ENCODE measurements at regions of chr9 and their contacts with region 1.

Region 1: GRCh38 chr9:112898872-112899311 is 8.2 kb upstream of the SLC46A2 start:
- DNase-seq: no peak
- H3K4me3 ChIP-seq: no peak overlapping the region
- CTCF ChIP-seq: no peak

Region 2: DNA sequence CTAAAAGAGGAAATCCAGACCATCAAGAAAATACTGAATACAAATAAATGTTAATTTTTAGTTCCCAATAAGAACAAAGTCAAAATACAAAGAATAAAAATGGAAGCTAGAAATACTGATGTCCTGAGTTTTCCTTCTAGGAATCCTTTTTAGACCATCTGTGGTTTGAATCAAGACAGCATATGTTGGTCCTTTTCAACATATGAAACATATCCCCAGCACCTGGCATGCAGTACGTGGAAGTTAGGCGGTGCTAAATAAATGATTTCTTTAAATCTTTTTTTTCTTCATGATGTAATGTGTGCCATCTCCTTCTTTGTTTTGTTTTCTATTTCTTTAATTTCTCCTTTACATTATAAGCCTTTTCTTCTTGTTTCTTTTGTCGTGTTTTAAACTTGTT is 378.2 kb before region 1 on chr9:
- CTCF ChIA-PET with region 1: no interaction called
- POLR2A ChIA-PET with region 1: no interaction called
- DNase-seq: no peak
- H3K4me3 ChIP-seq: no peak overlapping the region
- CTCF ChIP-seq: no peak

Region 3: DNA sequence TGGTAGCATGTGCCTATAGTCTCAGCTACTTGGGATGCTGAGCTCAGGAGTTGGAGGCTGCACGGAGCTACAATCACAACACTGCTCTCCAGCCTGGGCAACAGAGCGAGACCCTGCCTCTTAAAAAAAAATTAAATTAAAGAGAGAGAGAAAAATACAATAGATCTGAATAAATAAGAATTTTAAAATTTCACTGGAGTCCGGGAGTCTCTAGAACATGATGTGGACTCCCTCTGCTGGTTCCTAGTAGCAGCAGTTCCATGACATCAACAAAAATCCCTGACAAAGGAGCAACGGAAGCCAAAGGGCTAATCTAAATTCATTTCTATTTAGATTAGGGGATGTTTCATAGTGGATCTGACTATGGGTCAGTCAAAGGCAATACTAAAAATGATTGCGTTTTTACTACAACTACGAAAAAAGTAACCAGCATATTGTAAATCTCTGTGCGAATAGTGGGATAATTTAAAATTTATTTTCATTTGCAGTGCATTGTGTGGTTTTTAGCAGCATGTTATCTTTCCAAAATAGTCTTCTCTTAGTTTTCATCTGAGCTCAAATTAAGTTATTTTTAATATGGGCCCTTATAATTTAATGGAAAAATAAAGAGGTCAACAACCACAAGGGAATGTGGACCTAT is 187.7 kb before region 1 on chr9:
- CTCF ChIA-PET with region 1: interaction called, 12 read pairs
- POLR2A ChIA-PET with region 1: no interaction called
- DNase-seq: no peak
- H3K4me3 ChIP-seq: no peak overlapping the region
- CTCF ChIP-seq: peak; percentile 57

Region 4: DNA sequence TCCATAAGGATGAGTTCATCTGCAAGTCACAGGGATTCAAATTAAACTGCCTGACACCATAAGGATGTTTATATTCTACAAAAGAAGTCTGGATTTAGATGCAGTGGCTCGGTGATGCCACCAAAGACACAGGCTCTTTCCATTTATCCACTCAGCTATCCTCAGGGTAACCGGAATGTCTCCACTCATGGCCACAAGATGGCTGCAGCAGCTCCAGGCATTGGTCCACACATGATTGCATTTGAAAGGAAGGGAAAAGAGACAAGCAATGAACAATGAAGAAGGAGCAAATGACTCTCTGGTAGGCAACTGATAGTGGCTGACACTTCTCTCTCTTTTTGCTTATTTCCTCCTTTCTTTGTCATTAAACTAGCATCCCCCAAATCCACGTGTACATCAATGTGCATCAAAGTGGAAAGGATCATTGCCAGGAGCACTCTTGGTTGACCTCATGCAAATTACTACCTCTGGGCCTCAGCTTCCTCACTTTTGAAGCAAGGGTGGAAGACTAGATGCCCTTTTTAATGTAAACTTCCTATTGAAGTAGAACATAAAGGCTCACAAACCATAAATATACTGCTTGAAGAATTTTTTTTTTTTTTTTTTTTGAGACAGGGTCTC is 155.6 kb before region 1 on chr9:
- CTCF ChIA-PET with region 1: interaction called, 10 read pairs
- POLR2A ChIA-PET with region 1: interaction called, 4 read pairs
- DNase-seq: no peak
- H3K4me3 ChIP-seq: no peak overlapping the region
- CTCF ChIP-seq: peak; percentile 22

Region 5: DNA sequence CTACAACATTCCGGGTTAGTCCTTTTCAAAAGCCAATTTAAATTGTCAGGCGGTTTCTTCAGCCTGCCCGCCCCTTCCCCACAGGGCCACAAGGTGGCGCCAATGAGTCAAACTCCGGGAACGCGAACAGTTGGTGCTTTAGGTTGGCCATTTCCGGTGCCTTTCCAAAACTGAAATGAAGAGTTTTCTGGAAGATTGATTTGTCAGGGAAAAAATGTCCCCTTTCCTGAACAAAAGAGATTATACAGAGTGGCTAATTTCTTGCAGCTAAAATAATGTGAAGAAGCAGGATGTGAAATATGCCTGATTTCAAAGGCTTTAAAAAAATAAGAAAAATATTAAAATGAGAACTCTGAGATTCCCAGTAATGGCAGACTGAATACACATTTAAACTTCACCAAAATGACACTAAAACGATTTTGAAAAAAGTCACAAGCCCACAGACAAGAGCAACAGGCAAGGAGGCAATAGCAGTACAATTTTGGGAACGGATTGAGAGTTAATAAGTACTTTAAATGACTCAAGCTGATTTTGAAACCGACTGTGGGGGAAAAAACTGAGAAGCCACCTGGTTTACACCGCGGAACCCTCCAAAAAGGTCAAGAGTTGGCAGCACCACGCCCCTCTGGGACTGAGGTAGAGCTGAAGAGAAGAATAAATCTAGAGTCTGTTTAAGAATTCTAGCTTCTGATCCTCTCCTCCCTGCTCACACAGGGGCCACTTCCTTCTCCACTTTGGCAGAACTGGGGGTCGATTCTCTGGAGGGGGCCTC is 53.9 kb before region 1 on chr9:
- CTCF ChIA-PET with region 1: interaction called, 264 read pairs
- POLR2A ChIA-PET with region 1: no interaction called
- DNase-seq: no peak
- H3K4me3 ChIP-seq: no peak overlapping the region
- CTCF ChIP-seq: peak; percentile 92

Region 6: DNA sequence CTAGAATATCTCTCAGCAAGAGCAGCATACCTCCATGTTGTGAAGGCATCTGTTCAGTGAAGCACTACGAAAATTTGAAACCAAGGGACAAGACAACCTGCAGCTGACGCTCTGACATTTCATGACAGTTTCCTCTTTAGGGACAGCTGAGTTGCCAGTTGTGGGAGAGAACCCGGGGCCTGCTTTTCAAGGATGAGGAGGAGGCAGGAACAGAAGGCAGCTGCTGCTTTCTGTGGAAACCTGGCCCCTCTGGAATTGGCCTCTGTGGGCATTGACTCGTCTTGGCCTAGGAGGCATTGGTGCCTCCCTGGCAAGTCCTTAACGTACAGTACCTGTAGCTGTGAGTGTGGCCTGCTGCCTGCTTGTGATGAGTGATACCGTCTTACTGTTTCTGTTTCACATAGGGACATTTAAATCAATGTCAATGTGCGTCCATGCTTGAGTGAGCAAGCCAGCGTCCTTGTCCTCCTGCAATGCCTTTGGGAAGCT is 29.8 kb before region 1 on chr9:
- CTCF ChIA-PET with region 1: interaction called, 13 read pairs
- POLR2A ChIA-PET with region 1: no interaction called
- DNase-seq: no peak
- H3K4me3 ChIP-seq: no peak overlapping the region
- CTCF ChIP-seq: no peak

Region 7: GRCh38 chr9:112914514-112914913 is 15.6 kb after region 1 on chr9:
- CTCF ChIA-PET with region 1: interaction called, 49 read pairs
- POLR2A ChIA-PET with region 1: no interaction called
- DNase-seq: no peak
- H3K4me3 ChIP-seq: no peak overlapping the region
- CTCF ChIP-seq: no peak

Measured in AG04449 (cell line).